B cell (primary cell): ENCODE measurements at regions of chr10 and their contacts with region 1.

Region 1: GRCh38 chr10:21989453-21990154 is 13.9 kb downstream of the DNAJC1 start:
- DNase-seq: peak; percentile 47
- ATAC-seq: peak; percentile 76
- H3K4me3 ChIP-seq: no peak overlapping the region
- H3K4me3 Mint-ChIP-seq: no peak overlapping the region
- H3K27ac ChIP-seq: no peak overlapping the region
- H3K27ac Mint-ChIP-seq: no peak overlapping the region
- H3K4me1 ChIP-seq: no peaks in the 10 kb centered on the region
- H3K4me1 Mint-ChIP-seq: peaks cover 4% of the 10 kb centered on the region
- H3K27me3 ChIP-seq: no peaks in the 10 kb centered on the region
- H3K27me3 Mint-ChIP-seq: no peaks in the 10 kb centered on the region
- CTCF ChIP-seq: peak; percentile 46

Region 2: GRCh38 chr10:21445163-21445562 is 544.4 kb before region 1 on chr10:
- CTCF ChIA-PET with region 1: no interaction called
- POLR2A ChIA-PET with region 1: no interaction called
- intact Hi-C with region 1: no loop called
- DNase-seq: no peak
- ATAC-seq: no peak
- H3K4me3 ChIP-seq: no peak overlapping the region
- H3K4me3 Mint-ChIP-seq: no peak overlapping the region
- H3K27ac ChIP-seq: no peak overlapping the region
- H3K27ac Mint-ChIP-seq: no peak overlapping the region
- H3K4me1 ChIP-seq: no peaks in the 10 kb centered on the region
- H3K4me1 Mint-ChIP-seq: no peaks in the 10 kb centered on the region
- H3K27me3 ChIP-seq: no peaks in the 10 kb centered on the region
- H3K27me3 Mint-ChIP-seq: no peaks in the 10 kb centered on the region
- CTCF ChIP-seq: no peak

Region 3: DNA sequence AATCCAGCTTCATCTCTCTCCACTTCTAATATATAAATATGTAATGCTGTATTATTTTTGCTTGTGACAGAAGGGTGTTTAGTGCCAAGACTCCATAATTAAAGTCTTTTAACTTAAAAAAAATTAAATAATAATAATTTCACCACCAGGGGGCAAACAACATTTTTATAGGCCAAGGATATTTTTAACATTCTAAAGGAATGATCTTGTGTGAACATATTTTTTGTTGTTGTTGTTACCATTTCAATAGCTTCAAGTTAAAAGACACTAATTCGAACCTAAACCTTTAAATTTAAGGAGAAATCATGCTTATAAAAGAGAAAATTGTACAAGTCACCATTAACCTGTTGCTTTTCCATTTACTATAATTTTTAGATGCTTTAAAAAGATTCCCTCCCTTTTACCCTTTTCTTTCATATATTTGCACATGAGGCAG is 21.4 kb after region 1 on chr10:
- CTCF ChIA-PET with region 1: interaction called, 65 read pairs
- POLR2A ChIA-PET with region 1: no interaction called
- intact Hi-C with region 1: no loop called
- DNase-seq: peak; percentile 39
- ATAC-seq: no peak
- H3K4me3 ChIP-seq: no peak overlapping the region
- H3K4me3 Mint-ChIP-seq: no peak overlapping the region
- H3K27ac ChIP-seq: no peak overlapping the region
- H3K27ac Mint-ChIP-seq: no peak overlapping the region
- H3K4me1 ChIP-seq: peaks cover 0 to 3% of the 10 kb centered on the region in 2 donors
- H3K4me1 Mint-ChIP-seq: peaks cover 5% of the 10 kb centered on the region
- H3K27me3 ChIP-seq: no peaks in the 10 kb centered on the region
- H3K27me3 Mint-ChIP-seq: no peaks in the 10 kb centered on the region
- CTCF ChIP-seq: peak; percentile 83

Region 4: DNA sequence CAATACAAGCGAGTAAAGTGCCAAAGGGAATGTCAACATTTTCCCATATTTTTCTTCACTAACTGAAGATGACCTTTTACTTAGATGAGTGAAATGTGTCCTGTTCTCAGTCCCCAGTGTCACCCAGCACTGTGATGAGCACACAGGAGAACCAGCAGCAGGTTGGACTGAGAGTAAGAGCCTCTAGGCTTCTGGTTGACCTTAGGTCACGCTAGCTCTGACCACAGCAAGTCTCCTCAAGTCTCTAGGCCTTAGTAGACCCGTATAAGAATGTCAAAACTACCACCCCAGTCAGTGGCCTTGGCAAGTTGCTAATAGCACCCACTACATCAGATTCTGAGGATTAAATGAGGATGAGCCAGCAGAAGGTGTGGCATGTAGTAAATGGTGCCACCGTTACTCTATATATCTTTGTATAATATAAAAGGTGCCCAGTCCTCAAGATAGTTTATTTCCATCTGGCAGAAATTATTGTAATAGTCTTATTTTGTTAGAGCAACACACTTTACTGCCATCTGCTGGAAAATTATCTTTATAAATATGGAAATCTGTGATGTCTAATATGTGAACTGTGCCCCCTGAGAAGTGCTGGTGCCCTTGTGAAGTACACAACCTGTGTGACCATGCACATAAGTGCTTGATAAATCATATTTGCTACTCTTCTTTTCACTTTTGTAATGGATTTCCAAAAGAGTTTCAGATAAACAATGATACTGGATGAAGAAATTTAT is 431.3 kb after region 1 on chr10:
- CTCF ChIA-PET with region 1: interaction called, 8 read pairs
- POLR2A ChIA-PET with region 1: no interaction called
- intact Hi-C with region 1: loop called (anchors 5 kb)
- DNase-seq: peak; percentile 37
- ATAC-seq: peak; percentile 54
- H3K4me3 ChIP-seq: no peak overlapping the region
- H3K4me3 Mint-ChIP-seq: no peak overlapping the region
- H3K27ac ChIP-seq: no peak overlapping the region
- H3K27ac Mint-ChIP-seq: no peak overlapping the region
- H3K4me1 ChIP-seq: peaks cover 4 to 5% of the 10 kb centered on the region in 2 donors
- H3K4me1 Mint-ChIP-seq: peaks cover 5% of the 10 kb centered on the region
- H3K27me3 ChIP-seq: peaks cover 0 to 2% (median 0%) of the 10 kb centered on the region in 4 experiments
- H3K27me3 Mint-ChIP-seq: no peaks in the 10 kb centered on the region
- CTCF ChIP-seq: peak; percentile 32

Region 5: DNA sequence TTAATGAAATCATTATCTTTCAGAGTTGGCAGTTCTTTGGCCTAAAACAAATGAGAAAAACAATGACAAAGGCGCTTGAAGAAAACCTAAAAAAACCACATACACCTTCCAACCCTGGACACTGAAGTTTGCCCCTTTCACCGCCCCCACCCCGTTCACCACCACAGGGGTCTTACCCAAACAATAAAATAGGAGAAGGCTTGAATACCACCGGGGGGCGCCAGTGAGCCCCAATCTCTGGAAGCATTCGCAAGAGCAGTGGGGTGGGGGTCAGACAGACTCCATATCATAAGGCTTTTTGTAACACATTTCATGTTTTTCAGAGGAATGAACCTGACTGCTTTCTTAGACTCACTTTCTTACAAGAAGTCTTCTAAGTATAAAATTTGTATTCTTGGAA is 561.1 kb after region 1 on chr10:
- CTCF ChIA-PET with region 1: interaction called, 5 read pairs
- POLR2A ChIA-PET with region 1: no interaction called
- intact Hi-C with region 1: loop called (anchors 2 kb)
- DNase-seq: peak; percentile 72
- ATAC-seq: peak; percentile 49
- H3K4me3 ChIP-seq: no peak overlapping the region
- H3K4me3 Mint-ChIP-seq: no peak overlapping the region
- H3K27ac ChIP-seq: no peak overlapping the region
- H3K27ac Mint-ChIP-seq: no peak overlapping the region
- H3K4me1 ChIP-seq: no peaks in the 10 kb centered on the region
- H3K4me1 Mint-ChIP-seq: peaks cover 5% of the 10 kb centered on the region
- H3K27me3 ChIP-seq: no peaks in the 10 kb centered on the region
- H3K27me3 Mint-ChIP-seq: no peaks in the 10 kb centered on the region
- CTCF ChIP-seq: peak; percentile 84

Region 6: DNA sequence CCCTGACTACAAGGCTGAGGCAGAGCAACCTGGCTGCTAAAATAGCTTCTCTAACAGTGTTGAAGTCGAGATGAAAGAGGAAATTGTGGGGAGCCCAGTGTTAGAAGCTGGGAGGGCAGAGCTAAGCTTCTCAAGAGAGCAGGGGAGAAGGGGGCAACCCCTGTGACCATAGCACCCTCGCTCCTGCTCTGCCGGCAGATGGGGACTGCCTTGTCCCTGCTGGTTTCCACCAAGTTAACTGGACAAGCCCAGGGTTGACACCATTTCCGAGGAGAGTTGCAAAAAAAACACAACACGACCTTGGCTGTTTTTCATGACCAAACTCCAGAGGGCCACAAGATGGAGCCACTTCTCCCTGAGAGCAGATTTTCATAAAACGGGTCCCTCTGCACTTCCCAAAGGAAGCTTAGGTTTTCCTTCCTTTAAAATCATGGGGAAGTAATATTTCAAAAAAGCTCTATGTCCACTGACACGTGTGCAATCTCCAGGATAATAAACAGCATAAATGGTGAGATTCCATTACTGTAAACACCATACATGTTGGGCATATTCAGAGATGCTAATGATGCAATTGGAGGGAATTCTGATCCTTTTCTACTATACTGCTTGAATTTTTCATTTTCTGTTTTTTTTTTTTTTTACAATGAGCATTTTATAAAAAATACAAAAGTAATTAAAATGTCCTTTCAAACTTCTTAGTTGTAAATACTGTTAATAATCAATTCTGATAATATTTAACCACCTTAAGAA is 584.4 kb after region 1 on chr10:
- CTCF ChIA-PET with region 1: interaction called, 12 read pairs
- POLR2A ChIA-PET with region 1: no interaction called
- intact Hi-C with region 1: no loop called
- DNase-seq: peak; percentile 69
- ATAC-seq: peak; percentile 36
- H3K4me3 ChIP-seq: no peak overlapping the region
- H3K4me3 Mint-ChIP-seq: no peak overlapping the region
- H3K27ac ChIP-seq: no peak overlapping the region
- H3K27ac Mint-ChIP-seq: peak overlapping the region; percentile 46
- H3K4me1 ChIP-seq: peaks cover 5 to 7% of the 10 kb centered on the region in 2 donors
- H3K4me1 Mint-ChIP-seq: peaks cover 7% of the 10 kb centered on the region
- H3K27me3 ChIP-seq: no peaks in the 10 kb centered on the region
- H3K27me3 Mint-ChIP-seq: no peaks in the 10 kb centered on the region
- CTCF ChIP-seq: peak; percentile 69

Region 7: GRCh38 chr10:22849077-22849805 is 859.6 kb after region 1 on chr10:
- CTCF ChIA-PET with region 1: no interaction called
- POLR2A ChIA-PET with region 1: no interaction called
- intact Hi-C with region 1: loop called (anchors 5 kb)
- DNase-seq: no peak
- ATAC-seq: no peak
- H3K4me3 ChIP-seq: no peak overlapping the region
- H3K4me3 Mint-ChIP-seq: peak overlapping the region; percentile 48
- H3K27ac ChIP-seq: no peak overlapping the region
- H3K27ac Mint-ChIP-seq: no peak overlapping the region
- H3K4me1 ChIP-seq: peaks cover 0 to 8% of the 10 kb centered on the region in 2 donors
- H3K4me1 Mint-ChIP-seq: peaks cover 11% of the 10 kb centered on the region
- H3K27me3 ChIP-seq: peaks cover 0 to 8% (median 3%) of the 10 kb centered on the region in 4 experiments
- H3K27me3 Mint-ChIP-seq: peaks cover 12% of the 10 kb centered on the region
- CTCF ChIP-seq: no peak

Region 8: GRCh38 chr10:23067939-23068775 is 1078.6 kb after region 1 on chr10:
- CTCF ChIA-PET with region 1: interaction called, 8 read pairs
- POLR2A ChIA-PET with region 1: no interaction called
- intact Hi-C with region 1: loop called (anchors 1 kb)
- DNase-seq: peak; percentile 70
- ATAC-seq: peak; percentile 33
- H3K4me3 ChIP-seq: no peak overlapping the region
- H3K4me3 Mint-ChIP-seq: no peak overlapping the region
- H3K27ac ChIP-seq: no peak overlapping the region
- H3K27ac Mint-ChIP-seq: no peak overlapping the region
- H3K4me1 ChIP-seq: no peaks in the 10 kb centered on the region
- H3K4me1 Mint-ChIP-seq: no peaks in the 10 kb centered on the region
- H3K27me3 ChIP-seq: peaks cover 0 to 4% (median 0%) of the 10 kb centered on the region in 4 experiments
- H3K27me3 Mint-ChIP-seq: peaks cover 20% of the 10 kb centered on the region
- CTCF ChIP-seq: peak; percentile 87